Aorta (tissue), 5 donors: ENCODE measurements at regions of chr9 and their contacts with region 1.

Region 1: DNA sequence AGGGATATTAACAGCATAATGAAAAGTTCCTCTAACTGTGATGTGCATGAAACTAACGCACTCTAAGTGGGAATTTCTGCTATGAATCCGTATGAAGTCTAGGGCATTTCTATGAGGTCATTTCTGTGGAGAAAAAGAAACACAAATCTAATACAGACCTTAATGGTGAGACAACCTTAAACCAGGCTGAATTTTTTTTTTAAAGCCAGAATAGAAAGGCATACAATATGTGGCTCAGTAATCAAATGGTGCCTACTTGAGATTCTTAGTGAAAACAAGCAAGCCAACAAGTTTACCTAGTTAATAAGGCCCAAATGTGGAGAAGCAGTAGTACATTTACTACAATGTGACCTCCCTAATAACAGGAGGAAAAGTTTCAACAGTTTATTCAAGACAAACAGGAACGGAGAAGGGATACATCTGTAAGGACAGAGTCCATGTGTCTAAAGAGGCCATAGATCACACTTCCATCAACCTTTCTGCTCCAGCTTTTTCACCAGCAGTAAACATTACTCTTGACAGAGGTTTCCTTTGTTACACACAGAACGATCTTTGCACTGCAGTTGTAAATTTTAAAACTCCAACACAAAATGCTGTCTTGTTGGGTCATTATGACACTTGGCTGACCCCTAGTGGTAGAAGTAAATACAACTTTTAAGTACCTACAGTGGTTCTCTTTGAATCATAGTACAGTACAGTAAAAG is 26.2 kb downstream of the CARNMT1 start:
- DNase-seq: no peak
- ATAC-seq: peak; percentile 90
- H3K4me3 ChIP-seq: no peak overlapping the region
- H3K27ac ChIP-seq: no peak overlapping the region
- H3K4me1 ChIP-seq: no peaks in the 10 kb centered on the region
- H3K27me3 ChIP-seq: no peaks in the 10 kb centered on the region

Region 2: DNA sequence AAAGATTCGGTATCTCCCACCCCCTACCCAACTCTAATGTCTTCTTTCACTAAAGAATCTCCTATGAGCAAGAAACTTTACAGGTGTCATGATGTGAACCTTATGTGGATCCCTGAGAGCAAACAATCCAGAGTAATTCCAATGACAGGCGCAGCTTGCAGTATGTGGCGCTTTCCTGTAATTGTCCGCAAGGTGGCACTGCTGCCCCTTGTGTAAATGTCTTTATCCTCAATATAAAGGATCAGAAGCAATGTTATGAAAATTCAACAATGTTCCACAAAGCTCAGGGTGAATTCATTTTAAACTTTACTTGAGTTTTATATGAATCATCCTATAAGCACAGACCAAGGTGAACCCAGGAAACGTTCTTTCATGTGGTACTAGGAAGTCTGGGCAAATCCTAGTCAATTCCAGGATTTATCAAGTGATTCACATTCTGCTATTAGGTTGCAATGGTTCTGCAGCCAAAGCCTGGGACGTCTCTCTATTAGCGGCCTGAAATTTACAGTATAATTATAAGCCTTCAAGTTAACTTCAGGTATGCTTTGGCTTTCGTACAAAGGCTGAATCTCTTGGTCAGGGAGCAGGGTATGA is 227.9 kb before region 1 on chr9:
- intact Hi-C with region 1: loop called (anchors 2 kb)
- DNase-seq: peak; percentile 78 to 86
- ATAC-seq: peak; percentile 80
- H3K4me3 ChIP-seq: no peak overlapping the region
- H3K27ac ChIP-seq: no peak overlapping the region
- H3K4me1 ChIP-seq: no peaks in the 10 kb centered on the region
- H3K27me3 ChIP-seq: no peaks in the 10 kb centered on the region

Region 3: DNA sequence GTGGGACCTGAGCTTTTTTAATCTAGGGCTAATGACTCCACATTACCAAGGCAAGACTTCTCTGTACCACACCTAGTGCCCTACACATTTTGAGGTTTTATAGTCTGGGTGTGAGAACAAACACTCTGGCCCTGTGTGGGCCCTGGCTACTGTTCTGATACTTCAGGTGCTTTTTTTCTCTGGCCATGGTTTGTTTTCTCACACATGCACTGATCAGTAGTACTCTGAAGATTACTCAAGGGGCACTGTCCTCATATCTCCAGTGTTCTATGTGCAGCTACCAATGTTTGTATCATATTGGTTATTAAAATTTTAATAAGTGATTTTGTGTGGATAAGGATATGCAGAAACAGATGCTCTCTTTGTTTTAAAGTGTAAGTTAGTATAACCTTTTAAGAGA is 43.3 kb before region 1 on chr9:
- intact Hi-C with region 1: loop called in 1 of 2 experiments (anchors 5 kb)
- DNase-seq: no peak
- ATAC-seq: no peak
- H3K4me3 ChIP-seq: no peak overlapping the region
- H3K27ac ChIP-seq: no peak overlapping the region
- H3K4me1 ChIP-seq: no peaks in the 10 kb centered on the region
- H3K27me3 ChIP-seq: no peaks in the 10 kb centered on the region